ENCODE measurements at regions of chr5 and their contacts with region 1.

Region 1: DNA sequence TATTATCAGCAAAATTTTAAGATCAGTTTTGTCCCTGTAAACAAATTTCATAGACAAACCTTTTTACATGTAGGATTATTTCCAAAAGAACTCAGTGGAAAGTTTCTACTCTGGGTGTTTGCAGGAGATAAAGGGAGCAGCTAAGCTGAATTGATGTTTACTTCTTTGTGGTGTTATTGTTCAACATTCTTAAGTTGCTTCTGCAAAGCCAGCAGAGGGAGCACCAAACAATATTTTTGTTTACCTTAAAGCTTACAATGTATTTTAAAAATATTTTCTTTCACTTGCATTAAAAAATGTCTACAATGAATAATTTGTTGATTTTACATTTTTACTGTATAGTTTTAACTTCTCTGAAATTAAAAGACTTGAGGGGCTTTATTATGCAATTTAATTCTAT is 135.4 kb downstream of the ATG10 start:
- DNase-seq: no peak
- H3K4me3 ChIP-seq: no peak overlapping the region
- H3K4me3 Mint-ChIP-seq: no peak overlapping the region
- H3K27ac Mint-ChIP-seq: no peak overlapping the region
- H3K4me1 ChIP-seq: peaks cover 9% of the 10 kb centered on the region; the same call in 1 of the 2 replicates
- H3K4me1 Mint-ChIP-seq: peaks cover 14% of the 10 kb centered on the region
- H3K27me3 ChIP-seq: no peaks in the 10 kb centered on the region
- H3K27me3 Mint-ChIP-seq: no peaks in the 10 kb centered on the region
- CTCF ChIP-seq: peak; percentile 21 to 25

Region 2: DNA sequence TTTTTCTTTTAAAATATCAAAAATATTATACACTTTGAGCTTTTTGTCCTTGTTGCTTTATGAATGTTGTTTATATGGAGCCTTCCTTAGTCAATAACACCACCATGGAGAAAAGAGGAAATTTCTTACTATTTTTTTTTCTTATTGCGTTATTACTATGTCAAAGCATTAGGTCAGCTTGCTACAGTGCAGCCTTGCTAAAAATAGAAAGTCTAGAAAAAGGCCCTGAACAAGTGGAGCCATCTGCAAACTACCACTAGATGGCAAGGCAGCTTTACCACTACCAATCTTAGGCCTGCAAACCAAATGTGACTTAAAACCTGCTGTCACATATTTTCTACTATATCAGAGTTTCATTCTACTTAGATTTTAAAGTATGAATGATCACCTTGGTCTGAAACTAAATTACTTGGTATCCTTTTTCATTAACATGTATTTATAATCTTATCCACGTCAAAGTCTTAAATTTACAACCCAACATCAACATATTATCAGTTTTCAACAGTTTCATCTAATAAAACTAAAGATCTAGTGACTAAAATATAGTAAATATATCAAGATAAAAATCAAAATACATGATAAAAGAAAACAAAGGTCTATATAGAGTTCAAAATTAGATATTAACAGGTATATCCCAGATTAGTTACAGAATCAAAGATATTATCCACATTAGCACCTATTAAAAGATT is 600.2 kb before region 1 on chr5:
- CTCF ChIA-PET with region 1: no interaction called
- POLR2A ChIA-PET with region 1: no interaction called
- intact Hi-C with region 1: loop called (anchors 10 kb)
- DNase-seq: peak; percentile 47 to 63
- H3K4me3 ChIP-seq: no peak overlapping the region
- H3K4me3 Mint-ChIP-seq: no peak overlapping the region
- H3K27ac Mint-ChIP-seq: no peak overlapping the region
- H3K4me1 ChIP-seq: no peaks in the 10 kb centered on the region; the same call in 1 of the 2 replicates
- H3K4me1 Mint-ChIP-seq: peaks cover 7% of the 10 kb centered on the region
- H3K27me3 ChIP-seq: no peaks in the 10 kb centered on the region
- H3K27me3 Mint-ChIP-seq: peaks cover 2% of the 10 kb centered on the region
- CTCF ChIP-seq: peak; percentile 65 to 96

Region 3: DNA sequence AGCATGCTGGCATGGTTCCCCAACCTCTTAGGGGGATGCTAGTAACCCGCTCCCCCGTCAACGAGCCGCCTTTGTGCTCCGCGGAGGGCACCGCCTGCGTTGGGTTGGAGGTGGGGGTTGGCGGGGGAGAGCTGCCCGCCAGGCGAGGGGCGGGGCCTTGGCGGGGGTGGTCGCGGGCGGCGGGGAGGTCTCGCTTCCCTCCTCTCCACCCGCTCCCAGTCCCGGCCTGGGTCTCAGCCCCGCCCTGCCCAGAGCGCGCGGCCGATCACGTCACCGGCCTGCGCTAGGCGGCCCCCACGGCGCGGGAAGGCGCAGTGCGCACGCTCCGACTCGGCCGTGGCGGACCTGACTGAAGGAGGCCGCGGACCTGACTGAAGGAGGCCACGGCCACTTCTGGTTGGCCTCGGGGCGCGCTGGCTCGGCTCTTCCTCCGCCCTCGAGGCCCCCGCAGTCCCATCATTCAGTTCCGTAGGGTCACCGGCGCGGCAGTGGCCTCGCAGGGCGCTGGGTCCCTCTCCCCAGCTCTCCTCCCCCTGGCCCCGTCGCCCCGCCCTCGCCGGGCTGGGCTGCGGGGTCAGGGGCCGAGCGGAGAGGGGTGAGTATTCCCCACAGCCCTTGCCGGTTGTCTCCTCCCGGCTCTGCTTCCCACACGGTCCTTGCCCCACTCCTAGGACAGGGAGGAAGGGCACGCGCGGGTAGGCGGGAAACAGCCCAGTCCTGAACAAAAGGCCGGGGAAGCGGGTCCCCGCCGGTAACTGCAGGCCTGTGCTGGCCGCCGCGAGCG is 135.4 kb before region 1 on chr5 and contains the start of gene ATG10:
- CTCF ChIA-PET with region 1: no interaction called
- POLR2A ChIA-PET with region 1: no interaction called
- intact Hi-C with region 1: loop called (anchors 5 kb)
- DNase-seq: peak; percentile 90 to 94
- H3K4me3 ChIP-seq: peak within 1 kb of the TSS; percentile 80
- H3K4me3 Mint-ChIP-seq: peak within 1 kb of the TSS; percentile 84
- H3K27ac Mint-ChIP-seq: peak within 1 kb of the TSS; percentile 81
- H3K4me1 ChIP-seq: peaks cover 3% of the 10 kb centered on the region; the same call in 1 of the 2 replicates
- H3K4me1 Mint-ChIP-seq: peaks cover 13% of the 10 kb centered on the region
- H3K27me3 ChIP-seq: no peaks in the 10 kb centered on the region
- H3K27me3 Mint-ChIP-seq: no peaks in the 10 kb centered on the region
- CTCF ChIP-seq: no peak
- total RNA-seq, gene ATG10: 5.4 and 5.8 TPM in 2 replicates

Region 4: GRCh38 chr5:82050955-82051354 is 56.3 kb before region 1 on chr5:
- CTCF ChIA-PET with region 1: no interaction called
- POLR2A ChIA-PET with region 1: interaction called, 15 read pairs
- intact Hi-C with region 1: no loop called
- DNase-seq: no peak
- H3K4me3 ChIP-seq: no peak overlapping the region
- H3K4me3 Mint-ChIP-seq: no peak overlapping the region
- H3K27ac Mint-ChIP-seq: no peak overlapping the region
- H3K4me1 ChIP-seq: no peaks in the 10 kb centered on the region
- H3K4me1 Mint-ChIP-seq: no peaks in the 10 kb centered on the region
- H3K27me3 ChIP-seq: no peaks in the 10 kb centered on the region; the same call in 1 of the 2 replicates
- H3K27me3 Mint-ChIP-seq: no peaks in the 10 kb centered on the region
- CTCF ChIP-seq: no peak

Region 5: GRCh38 chr5:82073179-82073578 is 34.1 kb before region 1 on chr5:
- CTCF ChIA-PET with region 1: no interaction called
- POLR2A ChIA-PET with region 1: no interaction called
- intact Hi-C with region 1: no loop called
- DNase-seq: no peak
- H3K4me3 ChIP-seq: no peak overlapping the region
- H3K4me3 Mint-ChIP-seq: no peak overlapping the region
- H3K27ac Mint-ChIP-seq: no peak overlapping the region
- H3K4me1 ChIP-seq: no peaks in the 10 kb centered on the region
- H3K4me1 Mint-ChIP-seq: peaks cover 7% of the 10 kb centered on the region
- H3K27me3 ChIP-seq: no peaks in the 10 kb centered on the region
- H3K27me3 Mint-ChIP-seq: no peaks in the 10 kb centered on the region
- CTCF ChIP-seq: no peak